ENCODE measurements at regions of chr14 and their contacts with region 1.

Region 1: DNA sequence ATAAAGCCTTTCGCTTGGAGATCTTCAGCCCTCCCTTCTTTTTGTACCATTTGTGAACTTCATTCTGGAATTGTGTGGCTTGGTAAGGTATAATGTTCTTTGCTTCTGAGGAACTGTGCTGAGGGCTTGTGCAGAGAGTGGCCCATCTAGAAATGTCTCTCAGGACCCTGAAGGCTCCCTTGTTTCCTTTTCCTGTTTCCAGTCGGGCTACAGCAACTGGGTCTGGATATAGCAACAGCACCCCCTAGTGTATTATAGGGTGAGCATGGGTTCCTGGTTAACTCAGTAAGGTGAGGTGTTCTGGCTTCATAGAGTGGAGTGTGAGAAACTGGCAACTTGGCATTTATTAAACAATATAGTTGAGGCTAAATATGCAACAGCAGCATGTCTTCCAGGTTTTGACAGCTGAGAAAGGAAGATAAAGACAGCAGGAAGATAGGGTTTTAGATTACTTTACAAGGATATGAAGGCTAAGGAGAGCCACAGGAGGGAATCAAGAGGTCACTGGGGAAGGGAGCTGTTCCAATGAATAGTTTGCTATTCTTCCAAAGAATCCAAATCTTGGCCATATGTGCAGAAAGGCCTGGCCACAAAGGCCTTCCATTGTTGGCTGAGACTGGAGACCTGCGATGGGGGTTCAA is 49.1 kb upstream of the RNU6-8 start:
- DNase-seq: peak; percentile 85
- ATAC-seq: peak; percentile 79
- H3K4me3 ChIP-seq: no peak overlapping the region
- H3K27ac ChIP-seq: no peak overlapping the region
- H3K4me1 ChIP-seq: peaks cover 9% of the 10 kb centered on the region
- H3K27me3 ChIP-seq: no peaks in the 10 kb centered on the region
- CTCF ChIP-seq: peak; percentile 97

Region 2: DNA sequence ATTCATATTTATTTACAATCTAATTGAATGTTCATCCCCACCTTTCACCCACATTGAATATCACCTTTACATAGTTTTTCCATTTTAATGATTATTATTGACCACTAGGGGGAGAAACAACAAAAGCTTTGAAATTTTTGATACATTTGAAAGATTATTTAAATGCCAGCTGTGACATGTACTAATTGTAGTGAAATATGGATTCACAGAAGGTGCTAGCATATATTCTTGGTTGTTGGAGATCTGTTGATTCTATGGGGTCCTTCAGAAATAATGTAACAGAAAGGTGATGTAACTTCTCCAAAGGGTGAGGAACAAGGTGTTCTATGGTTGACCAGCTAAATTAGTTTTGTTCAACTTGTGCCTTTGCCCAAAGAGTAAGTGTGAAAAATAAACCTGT is 741.9 kb before region 1 on chr14:
- CTCF ChIA-PET with region 1: no interaction called
- POLR2A ChIA-PET with region 1: no interaction called
- intact Hi-C with region 1: loop called (anchors 1 kb)
- DNase-seq: peak; percentile 58
- ATAC-seq: peak; percentile 38
- H3K4me3 ChIP-seq: no peak overlapping the region
- H3K27ac ChIP-seq: no peak overlapping the region
- H3K4me1 ChIP-seq: no peaks in the 10 kb centered on the region
- H3K27me3 ChIP-seq: no peaks in the 10 kb centered on the region
- CTCF ChIP-seq: peak; percentile 87

Region 3: DNA sequence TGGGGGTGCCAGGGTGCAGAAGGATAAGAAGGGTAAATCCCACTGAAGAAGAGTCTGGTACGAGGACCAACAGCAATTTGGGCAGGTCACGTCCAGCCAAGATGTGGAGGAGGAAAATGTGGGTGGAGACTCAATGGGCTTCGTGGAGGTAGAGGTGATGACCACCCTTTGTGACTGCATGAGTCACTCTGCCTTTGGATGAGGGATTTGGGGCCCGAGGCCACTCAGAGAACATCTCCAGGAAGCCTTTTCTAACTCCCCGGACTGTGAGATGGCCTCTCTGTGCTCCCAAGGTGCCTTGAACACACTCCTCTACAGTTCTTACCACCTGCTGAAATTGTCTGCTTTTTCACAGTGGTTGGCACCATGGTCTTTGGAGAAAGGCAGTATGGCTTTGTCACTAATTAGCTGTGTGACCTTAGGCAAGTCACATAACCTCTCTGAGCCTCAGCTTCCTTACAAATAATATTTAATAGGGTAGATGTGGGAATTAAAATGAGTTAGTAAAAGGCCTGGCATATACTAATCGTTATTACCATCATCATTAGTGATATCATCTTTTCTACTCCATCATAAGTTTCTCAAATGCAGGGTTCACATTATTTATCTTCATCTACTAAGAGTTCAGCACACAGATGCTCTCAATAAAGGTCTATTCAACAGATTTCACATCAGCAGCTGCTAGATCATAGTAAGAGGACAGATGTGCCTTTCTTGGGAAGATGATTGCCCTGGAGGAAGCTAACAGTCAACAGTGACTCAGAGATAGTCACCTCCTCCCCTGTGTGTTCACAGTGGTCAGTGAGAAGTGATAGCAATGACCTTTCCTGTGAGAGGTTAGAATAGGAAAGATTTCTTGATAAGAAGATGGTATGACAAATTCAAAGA is 241.9 kb before region 1 on chr14:
- CTCF ChIA-PET with region 1: interaction called, 3 read pairs
- POLR2A ChIA-PET with region 1: no interaction called
- intact Hi-C with region 1: loop called (anchors 5 kb)
- DNase-seq: peak; percentile 95
- ATAC-seq: peak; percentile 71
- H3K4me3 ChIP-seq: no peak overlapping the region
- H3K27ac ChIP-seq: peak overlapping the region; percentile 88
- H3K4me1 ChIP-seq: peaks cover 61% of the 10 kb centered on the region
- H3K27me3 ChIP-seq: no peaks in the 10 kb centered on the region
- CTCF ChIP-seq: no peak

Region 4: DNA sequence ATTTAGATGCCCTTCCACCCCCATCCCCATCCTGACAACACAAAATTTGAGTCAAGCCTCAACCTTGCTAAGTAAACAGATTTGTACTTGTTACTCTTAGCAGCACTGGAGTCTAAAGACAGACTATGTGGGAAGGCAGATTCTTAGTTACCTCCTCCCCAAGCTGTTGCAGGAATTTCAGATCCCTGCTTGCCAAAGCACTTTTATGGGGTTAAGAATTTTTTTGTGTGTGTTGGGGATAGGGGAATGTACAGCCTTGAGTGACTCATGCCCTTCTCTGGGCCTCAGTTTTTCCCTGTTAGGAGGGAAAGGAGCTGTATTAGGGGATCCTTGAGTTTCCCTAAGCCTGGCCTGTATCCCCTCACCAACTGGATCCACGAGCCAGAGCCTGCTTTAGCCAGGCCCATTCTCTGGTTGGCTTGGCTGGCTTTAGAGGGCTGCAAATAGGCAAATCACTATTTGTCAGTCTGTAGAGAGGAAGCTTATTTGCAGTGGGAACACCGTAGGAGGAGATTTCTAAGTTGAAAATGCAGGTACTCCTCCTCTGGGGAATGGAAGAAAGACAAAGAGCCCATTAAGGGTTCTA is 21.4 kb before region 1 on chr14:
- CTCF ChIA-PET with region 1: no interaction called
- POLR2A ChIA-PET with region 1: no interaction called
- intact Hi-C with region 1: no loop called
- DNase-seq: peak; percentile 73
- ATAC-seq: peak; percentile 62
- H3K4me3 ChIP-seq: peak overlapping the region; percentile 26; the same call in 1 of the 2 replicates
- H3K27ac ChIP-seq: peak overlapping the region; percentile 77
- H3K4me1 ChIP-seq: peaks cover 50% of the 10 kb centered on the region
- H3K27me3 ChIP-seq: no peaks in the 10 kb centered on the region
- CTCF ChIP-seq: no peak

Region 5: GRCh38 chr14:32370720-32371119 is 118.6 kb after region 1 on chr14:
- CTCF ChIA-PET with region 1: interaction called, 3 read pairs
- POLR2A ChIA-PET with region 1: no interaction called
- intact Hi-C with region 1: loop called (anchors 2 kb)
- DNase-seq: peak; percentile 89
- ATAC-seq: peak; percentile 82
- H3K4me3 ChIP-seq: peak overlapping the region; percentile 36; the same call in 1 of the 2 replicates
- H3K27ac ChIP-seq: peak overlapping the region; percentile 81
- H3K4me1 ChIP-seq: peaks cover 59% of the 10 kb centered on the region
- H3K27me3 ChIP-seq: no peaks in the 10 kb centered on the region
- CTCF ChIP-seq: no peak

Region 6: DNA sequence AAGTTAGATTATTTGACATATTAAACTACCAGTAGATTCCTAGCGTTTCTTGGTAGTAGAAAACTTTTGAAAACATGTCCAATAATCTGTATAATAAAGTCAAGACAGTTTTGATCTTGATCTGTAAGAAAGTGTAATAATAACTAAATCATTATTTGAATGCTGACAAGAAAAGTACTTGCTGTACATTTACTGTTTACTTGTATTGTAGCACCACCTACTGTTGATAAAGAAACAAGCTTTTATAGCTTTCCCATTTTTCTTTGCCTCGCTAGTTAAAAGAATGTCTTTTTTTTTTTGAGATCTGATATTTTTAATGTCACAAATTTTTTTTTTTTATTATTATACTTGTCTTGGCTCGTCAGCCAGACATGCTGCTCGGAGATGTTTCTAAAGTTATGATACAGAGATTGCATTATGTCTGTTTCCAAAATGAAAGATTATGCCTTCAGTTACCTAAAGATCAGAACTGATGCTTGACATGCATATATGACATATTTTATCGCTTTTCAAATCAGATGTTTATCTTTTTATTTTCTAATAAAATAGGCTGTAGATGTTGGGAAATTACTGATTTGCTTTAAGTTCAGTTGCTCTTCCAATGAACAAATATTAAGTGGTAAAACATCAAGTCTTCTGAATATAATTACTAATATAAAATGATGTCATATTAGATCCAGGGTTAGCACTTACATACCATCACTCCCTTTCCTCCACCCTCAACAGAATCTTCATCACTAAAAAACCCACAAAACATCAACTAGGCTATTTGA is 217.4 kb after region 1 on chr14:
- CTCF ChIA-PET with region 1: interaction called, 14 read pairs
- POLR2A ChIA-PET with region 1: interaction called, 3 read pairs
- intact Hi-C with region 1: loop called (anchors 1 kb)
- DNase-seq: peak; percentile 67
- ATAC-seq: peak; percentile 18
- H3K4me3 ChIP-seq: no peak overlapping the region
- H3K27ac ChIP-seq: peak overlapping the region; percentile 23
- H3K4me1 ChIP-seq: peaks cover 57% of the 10 kb centered on the region
- H3K27me3 ChIP-seq: no peaks in the 10 kb centered on the region
- CTCF ChIP-seq: peak; percentile 79

Measured in PC-3 (cell line).